ENCODE measurements at regions of chr1 and their contacts with region 1.

Region 1: DNA sequence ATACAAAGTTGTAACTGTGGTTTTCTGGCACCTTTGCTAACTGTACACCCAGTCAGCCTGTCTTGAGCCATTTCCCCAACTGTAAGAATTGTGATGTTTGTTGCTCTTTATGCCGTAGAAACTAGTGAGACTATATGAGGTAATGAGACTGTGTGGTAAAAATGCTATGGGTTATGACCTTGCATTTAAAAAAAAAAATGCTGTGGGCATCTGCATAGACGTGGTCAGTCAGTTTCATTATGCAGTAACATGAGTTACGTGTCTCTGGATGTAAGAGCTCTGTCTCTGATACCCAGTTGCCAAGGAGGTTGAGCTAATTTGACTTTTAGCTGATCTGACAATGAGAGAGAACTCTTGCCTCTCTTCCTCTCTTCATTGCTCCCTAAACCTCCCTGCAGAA is 80.6 kb upstream of the LAMC2 start:
- DNase-seq: no peak

Region 2: DNA sequence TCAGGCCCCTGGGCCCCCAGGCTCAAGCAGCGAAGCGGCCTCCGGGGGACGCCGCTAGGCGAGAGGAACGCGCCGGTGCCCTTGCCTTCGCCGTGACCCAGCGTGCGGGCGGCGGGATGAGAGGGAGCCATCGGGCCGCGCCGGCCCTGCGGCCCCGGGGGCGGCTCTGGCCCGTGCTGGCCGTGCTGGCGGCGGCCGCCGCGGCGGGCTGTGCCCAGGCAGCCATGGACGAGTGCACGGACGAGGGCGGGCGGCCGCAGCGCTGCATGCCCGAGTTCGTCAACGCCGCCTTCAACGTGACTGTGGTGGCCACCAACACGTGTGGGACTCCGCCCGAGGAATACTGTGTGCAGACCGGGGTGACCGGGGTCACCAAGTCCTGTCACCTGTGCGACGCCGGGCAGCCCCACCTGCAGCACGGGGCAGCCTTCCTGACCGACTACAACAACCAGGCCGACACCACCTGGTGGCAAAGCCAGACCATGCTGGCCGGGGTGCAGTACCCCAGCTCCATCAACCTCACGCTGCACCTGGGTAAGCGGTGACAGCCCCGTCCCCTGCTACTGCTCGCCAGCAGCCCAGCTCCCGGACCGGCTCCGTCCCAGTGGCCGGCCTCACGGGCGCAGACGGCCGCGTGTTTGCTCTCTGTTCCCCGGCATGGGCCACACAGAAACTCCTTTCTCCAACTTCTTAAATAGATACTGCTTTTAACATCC is 81.7 kb before region 1 on chr1:
- intact Hi-C with region 1: loop called in 1 of 2 experiments (anchors 5 kb)
- DNase-seq: peak; percentile 83

Measured in posterior vena cava (tissue), 2 donors.